Activated B cell treated with CpG ODN at 0.5 μM for 24 hours (primary cell): ENCODE measurements at regions of chr10 and their contacts with region 1.

Region 1: GRCh38 chr10:132588301-132589013 is 50.9 kb downstream of the INPP5A start:
- DNase-seq: peak; percentile 39
- ATAC-seq: peak; percentile 65
- H3K4me3 Mint-ChIP-seq: peak overlapping the region; percentile 77
- H3K27ac Mint-ChIP-seq: peak overlapping the region; percentile 78
- H3K4me1 Mint-ChIP-seq: peaks cover 75% of the 10 kb centered on the region
- H3K27me3 Mint-ChIP-seq: no peaks in the 10 kb centered on the region
- CTCF ChIP-seq: no peak

Region 2: DNA sequence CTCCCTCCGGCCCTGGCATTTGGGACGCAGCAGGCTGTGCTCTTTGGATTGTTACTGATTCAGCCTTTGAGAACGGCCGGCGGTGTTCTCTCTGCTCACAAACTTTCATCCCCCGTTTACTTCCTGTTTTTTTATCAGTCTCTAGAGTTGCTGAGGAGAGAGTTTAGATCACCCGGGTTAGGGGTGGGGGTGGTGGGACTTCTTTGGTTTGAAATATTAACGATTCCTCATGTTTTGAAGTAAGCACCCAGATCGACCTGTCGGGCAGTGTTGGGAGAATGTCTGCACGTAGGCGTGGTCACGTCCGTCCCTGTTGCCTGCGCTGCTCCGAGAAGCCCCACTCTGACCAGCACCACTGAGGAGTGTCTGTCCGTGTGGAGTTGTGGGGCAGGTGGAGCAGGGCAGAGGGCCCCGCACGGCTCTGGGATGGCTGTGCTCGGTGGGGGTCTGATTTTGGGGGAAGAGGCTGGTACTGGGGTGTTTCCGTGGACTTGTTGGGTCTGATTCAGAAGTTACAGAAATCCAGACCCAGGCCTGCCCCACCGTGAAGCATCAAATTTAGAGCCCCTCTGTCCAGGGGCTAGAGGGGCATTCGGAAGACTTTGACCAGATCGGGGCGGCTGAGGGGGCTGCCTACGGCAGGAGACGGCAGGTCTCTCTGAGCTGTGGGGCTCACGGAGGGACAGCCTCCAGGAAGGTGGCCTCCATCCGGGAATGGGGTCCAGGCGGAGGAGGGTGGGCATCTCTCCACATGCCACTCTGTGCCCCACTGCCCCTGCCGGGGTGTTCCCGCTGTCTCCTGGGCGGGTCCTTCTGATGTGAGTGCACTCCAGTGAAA is 43.5 kb before region 1 on chr10:
- CTCF ChIA-PET with region 1: interaction called, 3 read pairs
- POLR2A ChIA-PET with region 1: interaction called, 6 read pairs
- intact Hi-C with region 1: loop called (anchors 1 kb)
- DNase-seq: no peak
- ATAC-seq: peak; percentile 32
- H3K4me3 Mint-ChIP-seq: peak overlapping the region; percentile 79
- H3K27ac Mint-ChIP-seq: peak overlapping the region; percentile 74
- H3K4me1 Mint-ChIP-seq: peaks cover 96% of the 10 kb centered on the region
- H3K27me3 Mint-ChIP-seq: no peaks in the 10 kb centered on the region
- CTCF ChIP-seq: no peak

Region 3: GRCh38 chr10:132551093-132551807 is 37.2 kb before region 1 on chr10:
- CTCF ChIA-PET with region 1: interaction called, 3 read pairs
- POLR2A ChIA-PET with region 1: interaction called, 8 read pairs
- intact Hi-C with region 1: loop called (anchors 1 kb)
- DNase-seq: no peak
- ATAC-seq: peak; percentile 32
- H3K4me3 Mint-ChIP-seq: peak overlapping the region; percentile 72
- H3K27ac Mint-ChIP-seq: peak overlapping the region; percentile 91
- H3K4me1 Mint-ChIP-seq: peaks cover 55% of the 10 kb centered on the region
- H3K27me3 Mint-ChIP-seq: no peaks in the 10 kb centered on the region
- CTCF ChIP-seq: no peak

Region 4: DNA sequence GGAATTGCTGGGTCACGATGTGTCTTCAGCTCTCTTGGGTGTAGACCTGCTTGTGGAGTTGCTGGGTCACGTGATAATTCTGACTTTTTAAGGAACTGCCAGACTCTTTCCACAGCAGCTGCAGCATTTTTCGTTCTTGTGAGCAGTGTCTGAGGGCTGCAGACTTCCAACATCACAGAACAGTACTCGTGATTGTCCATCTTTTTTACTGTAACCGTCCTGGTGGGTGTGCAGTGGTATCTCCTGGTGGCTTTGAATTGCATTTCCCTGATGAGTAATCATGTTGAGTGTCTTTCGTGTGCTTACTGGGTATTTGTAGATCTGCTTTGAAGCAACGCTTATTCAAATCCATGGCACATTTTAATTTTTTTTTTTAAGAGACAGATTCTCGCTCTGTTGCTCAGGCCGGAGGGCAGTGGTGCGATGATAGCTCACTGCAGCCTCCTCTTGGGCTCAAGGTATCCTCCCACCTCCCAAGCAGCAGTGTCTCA is 28.2 kb before region 1 on chr10:
- CTCF ChIA-PET with region 1: no interaction called
- POLR2A ChIA-PET with region 1: interaction called, 3 read pairs
- intact Hi-C with region 1: loop called (anchors 1 kb)
- DNase-seq: no peak
- ATAC-seq: peak; percentile 51
- H3K4me3 Mint-ChIP-seq: peak overlapping the region; percentile 60
- H3K27ac Mint-ChIP-seq: peak overlapping the region; percentile 76
- H3K4me1 Mint-ChIP-seq: peaks cover 53% of the 10 kb centered on the region
- H3K27me3 Mint-ChIP-seq: no peaks in the 10 kb centered on the region
- CTCF ChIP-seq: no peak